ENCODE measurements at regions of chr17 and their contacts with region 1.

Region 1: GRCh38 chr17:48908047-48908843 is at the start of gene UBE2Z:
- DNase-seq: peak; percentile 96
- H3K4me3 ChIP-seq: peak within 1 kb of the TSS; percentile 81 to 98 (median 90)
- H3K27ac ChIP-seq: peak within 1 kb of the TSS; percentile 85 to 95 (median 93)
- H3K4me1 ChIP-seq: peaks cover 0 to 46% (median 34%) of the 10 kb centered on the region in 4 donors
- H3K27me3 ChIP-seq: no peaks in the 10 kb centered on the region
- CTCF ChIP-seq: no peak
- EP300 ChIP-seq: no peak
- POLR2A ChIP-seq: peak; percentile 86 to 89
- total RNA-seq, gene UBE2Z: 46.8 to 55.6 (median 51.4) TPM

Region 2: GRCh38 chr17:48944519-48945260 is 36.4 kb after region 1 on chr17 and contains the start of gene SNF8:
- intact Hi-C with region 1: loop called (anchors 2 kb)
- DNase-seq: peak; percentile 93
- H3K4me3 ChIP-seq: peak within 1 kb of the TSS; percentile 67 to 86 (median 74)
- H3K27ac ChIP-seq: peak within 1 kb of the TSS; percentile 85 to 88 (median 86)
- H3K4me1 ChIP-seq: peaks cover 0 to 26% (median 22%) of the 10 kb centered on the region in 4 donors
- H3K27me3 ChIP-seq: no peaks in the 10 kb centered on the region
- CTCF ChIP-seq: no peak
- EP300 ChIP-seq: no peak
- POLR2A ChIP-seq: peak; percentile 58 to 59
- total RNA-seq, gene SNF8: 74.1 to 94.5 (median 85.2) TPM